GM10248 (cell line): ENCODE measurements at regions of chr1 and their contacts with region 1.

Region 1: GRCh38 chr1:167752219-167752985 is 30.6 kb downstream of the MPZL1 start:
- DNase-seq: no peak
- CTCF ChIP-seq: no peak

Region 2: DNA sequence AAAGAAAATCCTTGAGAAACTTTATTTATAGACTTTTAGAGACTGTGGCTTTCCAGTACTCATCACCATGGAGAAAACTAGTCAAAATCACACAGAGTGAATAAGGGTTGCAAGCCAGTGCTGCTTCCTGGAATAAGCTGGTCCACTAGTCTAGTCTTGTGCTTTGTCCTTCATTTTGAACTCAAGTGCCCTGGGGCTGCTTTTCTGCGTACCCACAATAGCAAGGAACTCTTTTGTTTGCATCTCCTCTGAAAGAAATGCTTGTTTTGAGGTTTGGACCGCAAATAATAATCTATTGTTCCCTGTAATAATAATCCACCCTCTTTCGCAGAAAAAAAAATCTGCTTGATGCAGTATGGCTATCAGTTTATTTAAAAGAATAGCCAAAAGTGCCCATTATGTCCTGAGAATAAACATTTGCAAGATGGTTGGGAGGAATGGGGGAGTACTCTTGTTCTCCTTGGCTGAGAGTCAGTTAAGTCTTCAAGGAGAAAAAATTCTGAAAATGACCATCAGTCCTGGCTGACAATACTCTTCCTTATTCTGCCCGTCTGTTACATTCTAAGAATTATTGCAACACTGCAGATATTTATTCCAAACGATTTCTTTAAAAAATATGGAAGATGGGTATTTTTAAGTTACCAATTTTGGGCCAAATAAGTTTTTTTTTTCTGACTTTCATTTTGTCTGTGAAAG is 11.3 kb after region 1 on chr1:
- CTCF ChIA-PET with region 1: interaction called, 11 read pairs
- POLR2A ChIA-PET with region 1: no interaction called
- DNase-seq: no peak
- CTCF ChIP-seq: no peak